Spleen (tissue), 13 donors: ENCODE measurements at regions of chr5 and their contacts with region 1.

Region 1: GRCh38 chr5:112983363-112983762 is 6.8 kb downstream of the DCP2 start:
- DNase-seq: no peak
- H3K4me3 ChIP-seq: no peak overlapping the region
- H3K27ac ChIP-seq: no peak overlapping the region
- H3K4me1 ChIP-seq: peaks cover 24 to 88% (median 56%) of the 10 kb centered on the region in 6 donors
- H3K27me3 ChIP-seq: no peaks in the 10 kb centered on the region
- CTCF ChIP-seq: no peak
- POLR2A ChIP-seq: no peak

Region 2: GRCh38 chr5:111550279-111551020 is 1432.9 kb before region 1 on chr5:
- intact Hi-C with region 1: no loop called
- DNase-seq: no peak
- H3K4me3 ChIP-seq: no peak overlapping the region
- H3K27ac ChIP-seq: peak overlapping the region in 6 of 8 donors; percentile 16 to 55 (median 38)
- H3K4me1 ChIP-seq: peaks cover 0 to 22% (median 16%) of the 10 kb centered on the region in 6 donors
- H3K27me3 ChIP-seq: no peaks in the 10 kb centered on the region
- CTCF ChIP-seq: peak in 9 of 11 experiments; percentile 22 to 73 (median 70)
- POLR2A ChIP-seq: no peak

Region 3: GRCh38 chr5:113513384-113514288 is 530.3 kb after region 1 on chr5 and contains the start of gene YTHDC2:
- intact Hi-C with region 1: loop called (anchors 10 kb)
- DNase-seq: peak; percentile 96
- H3K4me3 ChIP-seq: peak within 1 kb of the TSS; percentile 50 to 79 (median 69)
- H3K27ac ChIP-seq: peak within 1 kb of the TSS; percentile 84 to 94 (median 92)
- H3K4me1 ChIP-seq: peaks cover 0 to 43% (median 36%) of the 10 kb centered on the region in 6 donors
- H3K27me3 ChIP-seq: peaks cover 0 to 10% (median 0%) of the 10 kb centered on the region in 7 donors
- CTCF ChIP-seq: peak in 6 of 11 experiments; percentile 6 to 41 (median 24)
- POLR2A ChIP-seq: peak in 2 of 3 donors; percentile 18 to 33
- total RNA-seq, gene YTHDC2: 27.9 to 52.2 (median 38.6) TPM